ENCODE measurements at regions of chr4 and their contacts with region 1.

Region 1: GRCh38 chr4:99998062-99998867 is 48.2 kb upstream of the H2AZ1 start:
- DNase-seq: peak; percentile 24
- H3K4me3 ChIP-seq: no peak overlapping the region
- H3K27me3 ChIP-seq: no peaks in the 10 kb centered on the region
- CTCF ChIP-seq: peak; percentile 54

Region 2: DNA sequence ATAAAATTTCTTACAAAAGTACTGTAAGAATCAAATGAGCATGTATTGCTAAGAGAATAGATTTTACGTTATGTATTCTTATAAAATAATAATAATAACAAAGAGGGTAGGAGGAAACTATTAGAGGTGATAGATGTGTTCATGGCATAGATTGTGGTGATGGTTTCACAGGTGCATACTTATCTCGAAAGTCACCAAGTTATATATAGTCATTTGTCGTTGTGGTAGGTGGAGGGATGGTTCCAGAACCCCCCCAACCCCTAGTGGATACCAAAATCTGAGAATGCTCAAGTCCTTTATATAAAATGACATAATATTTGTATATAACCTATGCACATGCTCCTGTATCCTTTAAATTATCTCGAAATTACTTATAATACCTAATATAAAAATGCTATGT is 11.5 kb before region 1 on chr4:
- CTCF ChIA-PET with region 1: interaction called, 10 read pairs
- POLR2A ChIA-PET with region 1: no interaction called
- DNase-seq: no peak
- H3K4me3 ChIP-seq: no peak overlapping the region
- H3K27me3 ChIP-seq: no peaks in the 10 kb centered on the region
- CTCF ChIP-seq: no peak

Region 3: DNA sequence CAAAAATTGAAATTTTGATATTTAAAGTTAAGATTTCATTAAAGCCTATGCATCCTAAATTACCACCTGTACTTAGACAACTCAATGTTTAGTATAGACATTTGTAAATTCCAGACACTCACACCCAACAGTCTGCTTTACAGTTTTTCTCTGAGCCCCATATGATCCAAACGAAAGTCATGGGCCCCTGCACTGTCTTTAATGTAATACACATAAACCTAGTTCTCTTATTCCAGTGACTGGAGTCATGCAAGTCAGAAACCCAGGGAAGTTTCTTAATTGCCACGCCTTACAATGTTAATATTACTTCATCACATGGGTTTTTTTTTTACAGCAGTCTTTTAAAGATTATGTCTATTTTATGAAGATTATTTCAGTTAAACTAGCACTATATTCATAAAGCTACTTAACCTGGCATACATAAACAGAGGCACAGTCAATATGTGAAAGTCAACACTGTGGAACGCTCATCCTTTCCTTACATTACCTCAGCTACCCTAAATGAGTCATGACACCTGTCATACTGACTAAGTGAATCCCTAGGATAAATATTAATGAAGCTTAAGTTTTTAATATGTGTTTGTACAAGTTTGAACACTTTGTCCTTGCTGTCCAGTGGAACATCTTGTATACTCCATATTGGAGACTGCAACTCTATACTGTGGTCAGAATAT is 19.5 kb after region 1 on chr4:
- CTCF ChIA-PET with region 1: interaction called, 11 read pairs
- POLR2A ChIA-PET with region 1: no interaction called
- DNase-seq: no peak
- H3K4me3 ChIP-seq: no peak overlapping the region
- H3K27me3 ChIP-seq: peaks cover 2% of the 10 kb centered on the region; the same call in 1 of the 2 replicates
- CTCF ChIP-seq: no peak

Region 4: GRCh38 chr4:100069207-100069606 is 70.9 kb after region 1 on chr4:
- CTCF ChIA-PET with region 1: interaction called, 10 read pairs
- POLR2A ChIA-PET with region 1: no interaction called
- DNase-seq: no peak
- H3K4me3 ChIP-seq: no peak overlapping the region
- H3K27me3 ChIP-seq: no peaks in the 10 kb centered on the region
- CTCF ChIP-seq: no peak

Region 5: GRCh38 chr4:100093091-100093866 is 95.0 kb after region 1 on chr4:
- CTCF ChIA-PET with region 1: interaction called, 30 read pairs
- POLR2A ChIA-PET with region 1: no interaction called
- DNase-seq: no peak
- H3K4me3 ChIP-seq: no peak overlapping the region
- H3K27me3 ChIP-seq: no peaks in the 10 kb centered on the region
- CTCF ChIP-seq: peak; percentile 87

Measured in BJ (cell line).